ENCODE measurements at regions of chr19 and their contacts with region 1.

Region 1: DNA sequence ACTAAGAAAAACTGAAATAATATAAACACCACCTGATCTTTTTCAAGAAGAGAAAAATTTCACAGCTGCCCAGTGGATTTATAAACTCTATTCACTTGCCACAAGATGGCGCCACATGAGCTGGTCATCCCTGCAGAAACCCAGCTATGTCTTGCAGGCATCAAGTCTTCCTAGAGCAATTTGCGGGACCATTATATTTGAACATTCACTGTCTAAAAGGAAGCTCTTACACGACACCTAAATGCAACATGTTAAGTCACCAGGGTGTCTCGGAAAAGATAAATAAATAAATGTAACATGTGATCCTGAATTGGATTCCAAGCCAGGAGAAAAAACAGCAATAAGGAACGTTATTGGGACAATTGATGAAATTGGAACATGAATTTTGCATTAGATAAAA is 20.3 kb upstream of the AKT2 start:
- DNase-seq: peak; percentile 90
- H3K4me3 Mint-ChIP-seq: no peak overlapping the region
- H3K27ac Mint-ChIP-seq: no peak overlapping the region
- H3K4me1 Mint-ChIP-seq: peaks cover 2% of the 10 kb centered on the region
- H3K27me3 Mint-ChIP-seq: no peaks in the 10 kb centered on the region

Region 2: GRCh38 chr19:40315812-40316475 is 10.5 kb after region 1 on chr19:
- CTCF ChIA-PET with region 1: interaction called, 14 read pairs
- intact Hi-C with region 1: no loop called
- DNase-seq: no peak
- H3K4me3 Mint-ChIP-seq: no peak overlapping the region
- H3K27ac Mint-ChIP-seq: no peak overlapping the region
- H3K4me1 Mint-ChIP-seq: no peaks in the 10 kb centered on the region
- H3K27me3 Mint-ChIP-seq: no peaks in the 10 kb centered on the region

Region 3: DNA sequence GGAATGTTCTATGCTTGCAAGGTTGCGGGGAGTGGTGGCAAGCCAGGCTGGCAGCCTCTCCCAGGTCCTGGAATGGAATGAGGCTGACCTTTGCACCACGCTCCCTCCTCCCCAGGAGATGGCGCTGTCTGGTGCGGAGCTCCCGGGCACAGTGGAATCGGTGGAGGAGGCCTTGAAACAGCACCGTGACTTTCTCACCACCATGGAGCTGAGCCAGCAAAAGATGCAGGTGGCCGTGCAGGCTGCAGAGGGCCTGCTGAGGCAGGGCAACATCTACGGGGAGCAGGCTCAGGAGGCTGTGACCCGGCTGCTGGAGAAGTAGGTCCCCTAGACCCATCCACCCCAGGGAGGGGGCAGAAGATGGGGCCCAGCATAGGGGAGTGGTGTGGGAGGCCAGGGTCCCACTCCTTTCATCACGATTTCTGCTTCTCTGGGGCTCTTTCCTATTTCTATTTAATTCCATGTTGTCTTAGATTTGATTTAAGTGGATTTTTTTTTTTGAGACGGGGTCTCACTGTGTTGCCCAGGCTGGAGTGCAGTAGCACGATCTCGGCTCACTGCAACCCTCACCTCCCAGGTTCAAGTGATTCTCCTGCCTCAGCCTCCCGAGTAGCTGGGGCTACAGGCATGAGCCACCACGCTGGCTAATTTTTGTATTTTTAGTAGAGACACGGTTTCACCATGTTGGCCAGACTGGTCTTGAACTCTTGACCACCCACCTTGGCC is 218.1 kb after region 1 on chr19:
- CTCF ChIA-PET with region 1: interaction called, 8 read pairs
- intact Hi-C with region 1: loop called (anchors 2 kb)
- DNase-seq: peak; percentile 69
- H3K4me3 Mint-ChIP-seq: no peak overlapping the region
- H3K27ac Mint-ChIP-seq: no peak overlapping the region
- H3K4me1 Mint-ChIP-seq: peaks cover 4% of the 10 kb centered on the region
- H3K27me3 Mint-ChIP-seq: peaks cover 12% of the 10 kb centered on the region

Measured in activated naive CD4-positive, alpha-beta T cell treated with anti-CD3 and anti-CD28 coated beads for 36 hours (primary cell).